ENCODE measurements at regions of chr1 and their contacts with region 1.

Region 1: GRCh38 chr1:204162231-204163074 is 3.7 kb downstream of the REN start:
- DNase-seq: peak; percentile 81 to 84 (median 84)
- ATAC-seq: peak; percentile 93 to 98 (median 96)
- H3K4me3 ChIP-seq: no peak overlapping the region
- H3K27ac ChIP-seq: no peak overlapping the region
- H3K4me1 ChIP-seq: peaks cover 0 to 11% (median 0%) of the 10 kb centered on the region in 4 donors
- H3K27me3 ChIP-seq: no peaks in the 10 kb centered on the region
- CTCF ChIP-seq: peak; percentile 99 to 100 (median 100)
- POLR2A ChIP-seq: no peak

Region 2: DNA sequence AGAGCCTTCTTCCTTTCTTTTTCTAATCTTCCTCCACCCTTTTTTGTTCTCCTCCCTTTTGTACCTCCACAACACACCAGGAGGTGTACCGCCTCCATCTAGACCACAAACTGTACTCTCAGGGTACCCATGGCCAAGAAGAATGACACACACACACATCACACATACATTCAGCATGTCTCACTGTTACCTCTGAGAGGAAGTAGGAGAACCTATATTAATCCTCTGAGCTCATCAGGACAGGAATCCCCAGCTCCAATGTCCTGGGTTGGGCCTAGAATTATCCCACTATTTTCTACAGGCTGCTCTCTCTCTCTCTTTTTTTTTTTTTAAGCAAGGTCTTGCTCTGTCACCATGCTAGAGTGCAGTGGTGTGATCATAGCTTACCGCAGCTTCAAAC is 499.2 kb before region 1 on chr1:
- intact Hi-C with region 1: no loop called
- DNase-seq: no peak
- ATAC-seq: no peak
- H3K4me3 ChIP-seq: no peak overlapping the region
- H3K27ac ChIP-seq: no peak overlapping the region
- H3K4me1 ChIP-seq: peaks cover 0 to 26% (median 8%) of the 10 kb centered on the region in 4 donors
- H3K27me3 ChIP-seq: no peaks in the 10 kb centered on the region
- CTCF ChIP-seq: no peak
- POLR2A ChIP-seq: no peak

Region 3: GRCh38 chr1:204207136-204207616 is 44.7 kb after region 1 on chr1:
- intact Hi-C with region 1: loop called in 1 of 2 experiments (anchors 5 kb)
- DNase-seq: peak; percentile 74 to 80 (median 76)
- ATAC-seq: peak; percentile 88 to 95 (median 91)
- H3K4me3 ChIP-seq: no peak overlapping the region
- H3K27ac ChIP-seq: no peak overlapping the region
- H3K4me1 ChIP-seq: peaks cover 0 to 35% (median 11%) of the 10 kb centered on the region in 4 donors
- H3K27me3 ChIP-seq: no peaks in the 10 kb centered on the region
- CTCF ChIP-seq: peak; percentile 72 to 94 (median 88)
- POLR2A ChIP-seq: no peak

Region 4: DNA sequence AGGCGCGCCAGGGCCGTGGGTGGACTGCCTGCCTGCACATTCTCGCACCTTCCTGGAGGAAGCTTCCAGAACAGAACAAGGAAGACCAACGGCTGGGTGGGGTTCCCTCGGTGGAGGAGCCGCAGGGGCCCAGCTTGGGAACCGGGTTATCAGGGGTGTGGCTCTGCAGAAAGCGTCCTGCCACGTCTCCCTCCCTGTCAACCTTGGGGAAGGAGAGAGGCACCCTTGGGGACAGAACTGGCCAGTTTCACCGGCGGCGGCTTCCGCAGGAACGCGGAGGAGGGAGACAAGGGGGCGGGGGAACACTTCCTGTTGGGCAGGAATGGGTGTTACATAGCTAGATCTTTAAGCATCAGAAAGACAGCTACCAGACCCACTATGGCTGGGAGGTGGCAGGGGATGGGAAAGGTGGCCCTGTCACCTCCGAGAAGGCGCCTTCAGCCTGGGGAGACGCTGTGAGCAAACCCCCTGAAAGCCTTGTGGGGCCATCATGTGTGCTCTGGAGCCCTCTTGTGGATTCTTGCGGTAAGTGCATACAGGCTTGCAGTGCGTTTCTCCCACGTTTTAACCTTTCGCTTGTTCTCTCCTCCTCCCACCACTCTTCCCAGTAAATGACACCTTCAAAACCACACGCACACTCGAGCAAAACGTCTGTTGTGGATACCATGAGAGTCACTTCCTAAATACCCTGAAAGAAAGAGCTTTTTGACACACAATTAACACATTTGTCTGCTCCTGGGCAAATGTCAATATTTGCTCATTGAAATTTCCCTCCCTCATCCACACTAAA is 201.1 kb after region 1 on chr1:
- intact Hi-C with region 1: loop called (anchors 5 kb)
- DNase-seq: peak; percentile 62 to 67 (median 66)
- ATAC-seq: peak; percentile 88 to 97 (median 94)
- H3K4me3 ChIP-seq: peak overlapping the region; percentile 19 to 46 (median 42)
- H3K27ac ChIP-seq: peak overlapping the region; percentile 55 to 76 (median 61)
- H3K4me1 ChIP-seq: peaks cover 0 to 8% (median 2%) of the 10 kb centered on the region in 4 donors
- H3K27me3 ChIP-seq: no peaks in the 10 kb centered on the region
- CTCF ChIP-seq: peak; percentile 95 to 97 (median 96)
- POLR2A ChIP-seq: no peak